GM10248 (cell line): ENCODE measurements at regions of chr1 and their contacts with region 1.

Region 1: GRCh38 chr1:183685112-183685713 is 32.1 kb upstream of the APOBEC4 start:
- DNase-seq: peak; percentile 64
- CTCF ChIP-seq: peak; percentile 72

Region 2: GRCh38 chr1:183630748-183631147 is 54.5 kb before region 1 on chr1:
- CTCF ChIA-PET with region 1: interaction called, 17 read pairs
- POLR2A ChIA-PET with region 1: no interaction called
- DNase-seq: no peak
- CTCF ChIP-seq: no peak

Region 3: GRCh38 chr1:183635606-183636333 is 49.4 kb before region 1 on chr1 and contains the start of gene ARPC5:
- CTCF ChIA-PET with region 1: interaction called, 17 read pairs
- POLR2A ChIA-PET with region 1: no interaction called
- DNase-seq: peak; percentile 96
- CTCF ChIP-seq: no peak

Region 4: GRCh38 chr1:183646776-183647175 is 38.4 kb before region 1 on chr1:
- CTCF ChIA-PET with region 1: interaction called, 118 read pairs
- POLR2A ChIA-PET with region 1: no interaction called
- DNase-seq: no peak
- CTCF ChIP-seq: no peak

Region 5: DNA sequence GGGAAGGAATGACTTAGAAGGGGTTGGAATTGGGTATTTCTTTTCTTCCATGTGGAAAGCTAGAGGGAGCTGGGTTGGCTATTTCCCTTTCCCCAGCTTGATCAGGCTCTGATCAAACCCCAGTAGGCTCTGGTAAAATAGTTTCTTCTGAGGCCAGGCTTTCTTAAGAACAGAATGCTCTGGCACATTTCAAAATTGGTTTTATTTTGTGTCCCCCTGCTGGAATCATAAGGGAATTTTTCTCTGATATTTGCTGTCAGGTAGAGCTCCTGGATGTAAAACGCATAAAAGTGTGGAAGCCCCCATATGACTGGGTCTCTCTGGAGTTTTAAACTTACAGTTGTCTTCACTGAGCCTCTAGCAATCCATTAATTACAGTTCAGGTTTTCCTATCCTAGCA is 15.0 kb before region 1 on chr1:
- CTCF ChIA-PET with region 1: interaction called, 53 read pairs
- POLR2A ChIA-PET with region 1: no interaction called
- DNase-seq: no peak
- CTCF ChIP-seq: no peak

Region 6: DNA sequence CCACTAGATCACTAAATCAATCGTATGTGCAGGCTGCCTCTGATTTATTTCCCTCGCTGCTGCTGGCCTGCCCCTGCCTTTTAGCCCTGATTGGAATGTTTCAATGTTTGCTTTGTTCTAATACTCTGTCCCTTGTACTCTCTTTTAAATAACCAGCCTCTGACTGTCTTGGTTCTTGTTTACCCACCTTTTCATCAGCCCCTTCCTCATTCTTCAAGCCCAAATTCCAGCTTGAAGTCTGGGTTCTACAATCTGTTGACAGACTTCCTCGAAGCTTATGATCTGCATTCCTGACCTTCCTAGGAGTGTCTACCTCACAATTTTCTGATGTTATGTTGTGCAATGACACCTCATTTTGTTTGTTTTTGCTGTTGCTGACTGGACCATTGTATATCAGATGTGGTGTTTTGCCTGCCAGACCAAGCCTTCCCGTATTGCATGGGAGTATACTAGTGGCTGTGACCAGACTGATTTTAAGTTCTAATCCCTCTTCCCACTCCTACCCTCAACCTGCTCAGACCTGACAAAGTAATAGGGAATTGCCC is 14.5 kb after region 1 on chr1:
- CTCF ChIA-PET with region 1: interaction called, 58 read pairs
- POLR2A ChIA-PET with region 1: no interaction called
- DNase-seq: no peak
- CTCF ChIP-seq: no peak

Region 7: DNA sequence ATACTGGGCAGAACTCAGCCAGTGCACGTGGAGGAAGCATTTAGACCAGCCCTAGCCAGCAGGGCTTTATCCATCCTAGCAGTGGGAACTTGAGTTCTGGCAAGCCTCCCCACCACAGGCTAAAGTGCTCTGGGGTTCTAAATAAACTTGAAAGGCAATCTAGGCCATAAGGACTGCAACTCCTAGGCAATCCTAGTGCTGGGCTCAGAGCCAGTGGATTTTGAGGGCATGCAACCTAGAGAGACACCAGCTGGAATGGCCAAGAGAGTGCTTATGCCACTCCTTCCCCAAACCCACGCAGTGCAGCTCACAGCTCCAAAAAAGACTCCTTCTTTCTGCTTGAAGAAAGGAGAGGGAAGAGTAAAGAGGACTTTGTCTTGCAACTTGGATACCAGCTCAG is 38.4 kb after region 1 on chr1:
- CTCF ChIA-PET with region 1: interaction called, 10 read pairs
- POLR2A ChIA-PET with region 1: no interaction called
- DNase-seq: no peak
- CTCF ChIP-seq: no peak